Heart right ventricle (tissue), 16 donors: ENCODE measurements at regions of chr17 and their contacts with region 1.

Region 1: GRCh38 chr17:43170766-43171585 is at the start of gene NBR1:
- DNase-seq: peak; percentile 90 to 96
- ATAC-seq: peak; percentile 92 to 95 (median 93)
- H3K4me3 ChIP-seq: peak within 1 kb of the TSS; percentile 49 to 83 (median 73)
- H3K27ac ChIP-seq: peak within 1 kb of the TSS; percentile 91 to 97 (median 96)
- H3K4me1 ChIP-seq: peaks cover 2 to 56% (median 54%) of the 10 kb centered on the region in 9 donors
- H3K27me3 ChIP-seq: no peaks in the 10 kb centered on the region
- CTCF ChIP-seq: peak in 7 of 9 donors; percentile 8 to 48 (median 30)
- total RNA-seq, gene NBR1: 80.3 to 120 (median 107) TPM

Region 2: DNA sequence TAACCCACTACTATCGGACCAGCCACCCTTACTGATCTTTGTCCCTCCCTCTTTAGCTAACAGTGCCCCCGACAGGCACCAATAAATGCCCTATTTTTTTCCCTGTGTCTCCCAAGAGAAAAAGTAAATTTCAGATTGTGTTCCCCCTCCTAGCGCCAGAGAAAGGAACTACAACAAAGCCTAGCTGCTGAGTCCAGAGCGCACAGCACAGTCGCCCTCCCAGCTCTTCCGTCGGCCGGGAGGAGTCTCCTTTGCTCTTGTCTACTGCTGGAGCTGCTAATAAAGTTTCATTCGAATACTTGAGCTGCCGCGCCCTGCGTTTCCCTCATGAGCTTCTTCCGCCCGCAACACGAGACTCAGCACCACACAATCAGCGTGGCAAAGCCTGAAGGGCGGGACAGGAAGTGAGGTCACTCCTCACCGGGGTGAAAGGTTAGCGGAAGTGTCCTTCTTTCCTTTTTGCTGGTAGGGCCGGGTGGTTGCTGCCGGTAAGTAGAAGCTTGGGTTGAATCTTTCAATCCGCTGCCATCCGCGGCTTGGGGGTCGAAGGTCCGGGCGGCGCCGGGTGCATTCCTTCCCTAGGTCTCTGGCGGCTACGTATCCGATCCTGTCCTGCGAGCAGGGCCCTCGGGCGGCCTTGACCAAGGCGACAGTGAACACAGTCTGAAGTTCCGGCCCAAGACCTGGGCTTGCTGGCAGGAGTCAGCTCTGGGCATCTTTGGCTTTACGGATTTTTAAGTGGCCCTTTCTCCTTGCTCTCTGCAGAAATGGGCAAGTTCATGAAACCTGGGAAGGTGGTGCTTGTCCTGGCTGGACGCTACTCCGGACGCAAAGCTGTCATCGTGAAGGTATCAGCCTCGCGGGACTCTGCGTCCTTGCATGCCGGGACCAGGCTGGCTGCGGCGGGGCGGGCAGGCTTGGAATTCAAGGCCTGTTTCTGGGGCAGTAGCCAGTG is 172.7 kb before region 1 on chr17 and contains the start of gene RPL27:
- intact Hi-C with region 1: loop called in 1 of 10 experiments (anchors 2 kb)
- DNase-seq: peak; percentile 95 to 99
- ATAC-seq: peak; percentile 97 to 99 (median 99)
- H3K4me3 ChIP-seq: peak within 1 kb of the TSS; percentile 69 to 94 (median 84)
- H3K27ac ChIP-seq: peak within 1 kb of the TSS; percentile 63 to 96 (median 88)
- H3K4me1 ChIP-seq: peaks cover 5 to 45% (median 22%) of the 10 kb centered on the region in 9 donors
- H3K27me3 ChIP-seq: no peaks in the 10 kb centered on the region
- CTCF ChIP-seq: peak; percentile 77 to 94 (median 89)
- total RNA-seq, gene RPL27: 388 to 841 (median 519) TPM

Region 3: GRCh38 chr17:43118679-43119615 is 52.0 kb before region 1 on chr17:
- intact Hi-C with region 1: loop called in 4 of 10 experiments (anchors 2 to 10 kb)
- DNase-seq: no peak
- ATAC-seq: no peak
- H3K4me3 ChIP-seq: no peak overlapping the region
- H3K27ac ChIP-seq: no peak overlapping the region
- H3K4me1 ChIP-seq: peaks cover 0 to 4% (median 0%) of the 10 kb centered on the region in 9 donors
- H3K27me3 ChIP-seq: no peaks in the 10 kb centered on the region
- CTCF ChIP-seq: no peak

Region 4: DNA sequence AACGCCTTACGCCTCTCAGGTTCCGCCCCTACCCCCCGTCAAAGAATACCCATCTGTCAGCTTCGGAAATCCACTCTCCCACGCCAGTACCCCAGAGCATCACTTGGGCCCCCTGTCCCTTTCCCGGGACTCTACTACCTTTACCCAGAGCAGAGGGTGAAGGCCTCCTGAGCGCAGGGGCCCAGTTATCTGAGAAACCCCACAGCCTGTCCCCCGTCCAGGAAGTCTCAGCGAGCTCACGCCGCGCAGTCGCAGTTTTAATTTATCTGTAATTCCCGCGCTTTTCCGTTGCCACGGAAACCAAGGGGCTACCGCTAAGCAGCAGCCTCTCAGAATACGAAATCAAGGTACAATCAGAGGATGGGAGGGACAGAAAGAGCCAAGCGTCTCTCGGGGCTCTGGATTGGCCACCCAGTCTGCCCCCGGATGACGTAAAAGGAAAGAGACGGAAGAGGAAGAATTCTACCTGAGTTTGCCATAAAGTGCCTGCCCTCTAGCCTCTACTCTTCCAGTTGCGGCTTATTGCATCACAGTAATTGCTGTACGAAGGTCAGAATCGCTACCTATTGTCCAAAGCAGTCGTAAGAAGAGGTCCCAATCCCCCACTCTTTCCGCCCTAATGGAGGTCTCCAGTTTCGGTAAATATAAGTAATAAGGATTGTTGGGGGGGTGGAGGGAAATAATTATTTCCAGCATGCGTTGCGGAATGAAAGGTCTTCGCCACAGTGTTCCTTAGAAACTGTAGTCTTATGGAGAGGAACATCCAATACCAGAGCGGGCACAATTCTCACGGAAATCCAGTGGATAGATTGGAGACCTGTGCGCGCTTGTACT is 45.6 kb before region 1 on chr17 and contains the start of gene BRCA1:
- intact Hi-C with region 1: loop called in 5 of 10 experiments (anchors 2 to 5 kb)
- DNase-seq: peak; percentile 78 to 94
- ATAC-seq: peak; percentile 95 to 100 (median 100)
- H3K4me3 ChIP-seq: peak within 1 kb of the TSS; percentile 36 to 79 (median 65)
- H3K27ac ChIP-seq: peak within 1 kb of the TSS in 9 of 10 donors; percentile 63 to 89 (median 79)
- H3K4me1 ChIP-seq: peaks cover 3 to 42% (median 28%) of the 10 kb centered on the region in 9 donors
- H3K27me3 ChIP-seq: no peaks in the 10 kb centered on the region
- CTCF ChIP-seq: no peak
- total RNA-seq, gene BRCA1: 4.1 to 12.0 (median 8.2) TPM

Region 5: DNA sequence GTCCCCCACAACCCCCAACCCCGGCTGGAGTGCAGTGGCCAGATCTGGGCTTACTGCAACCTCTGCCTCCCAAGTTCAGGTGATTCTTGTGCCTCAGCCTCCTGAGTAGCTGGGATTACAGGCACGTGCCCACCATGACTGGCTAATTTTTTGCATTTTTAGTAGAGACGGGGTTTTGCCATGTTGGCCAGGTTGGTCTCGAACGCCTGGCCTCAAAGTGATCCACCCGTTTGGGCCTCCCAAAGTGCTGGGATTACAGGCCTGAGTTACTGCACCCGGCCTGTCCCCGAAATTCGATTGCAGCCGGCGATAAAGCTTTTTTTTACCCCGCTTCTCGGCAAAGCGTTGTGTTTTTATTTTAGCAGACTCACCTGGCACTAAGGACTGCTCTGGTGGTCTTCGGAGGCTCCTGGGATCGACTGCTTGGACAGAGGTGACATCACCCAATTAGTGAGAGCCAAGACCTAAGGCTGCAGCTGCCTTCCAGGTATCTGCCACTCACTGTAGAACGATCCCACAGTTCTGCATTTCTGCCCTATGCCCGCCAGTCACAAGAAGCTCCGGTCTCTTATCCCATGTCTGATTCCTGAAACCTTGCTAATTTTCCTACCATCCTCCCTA is 145.7 kb after region 1 on chr17:
- intact Hi-C with region 1: loop called in 1 of 10 experiments (anchors 5 kb)
- DNase-seq: no peak
- ATAC-seq: no peak
- H3K4me3 ChIP-seq: no peak overlapping the region
- H3K27ac ChIP-seq: no peak overlapping the region
- H3K4me1 ChIP-seq: no peaks in the 10 kb centered on the region
- H3K27me3 ChIP-seq: no peaks in the 10 kb centered on the region
- CTCF ChIP-seq: no peak